ENCODE measurements at regions of chr17 and their contacts with region 1.

Region 1: DNA sequence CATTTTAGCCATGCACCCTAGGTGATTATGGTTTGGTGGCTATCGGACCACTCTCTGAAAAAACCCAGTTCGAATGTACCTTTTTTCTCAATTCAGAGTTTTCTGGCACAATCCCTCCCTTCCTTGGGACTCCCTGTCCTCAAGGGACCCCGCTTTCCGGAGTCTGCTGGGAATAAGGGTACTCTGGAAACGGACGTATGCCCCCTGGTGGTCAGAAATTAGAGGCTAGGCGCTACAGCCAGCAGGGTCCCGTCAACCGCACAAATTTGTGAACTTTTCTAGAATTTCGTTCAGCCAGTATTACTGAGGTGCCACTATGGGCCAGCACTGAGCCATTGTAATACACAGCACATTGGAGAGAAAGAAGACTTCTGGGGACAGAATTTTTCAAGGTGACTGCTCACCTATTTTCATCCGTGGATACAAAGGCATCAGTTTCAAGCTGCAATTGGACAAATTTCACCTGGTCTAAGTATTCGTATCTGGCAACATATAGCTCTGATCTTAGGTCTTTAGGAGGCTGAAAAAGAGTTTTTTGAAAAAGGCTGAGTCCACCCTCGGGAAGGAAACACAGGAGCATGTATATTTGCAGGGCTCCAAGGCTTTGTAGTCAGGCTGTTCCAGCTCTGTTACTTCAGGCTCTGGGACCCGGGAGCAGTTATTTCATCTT is 27.1 kb upstream of the CRYBA1 start:
- DNase-seq: peak; percentile 83
- H3K4me3 Mint-ChIP-seq: no peak overlapping the region
- H3K27ac Mint-ChIP-seq: no peak overlapping the region
- H3K4me1 Mint-ChIP-seq: peaks cover 7% of the 10 kb centered on the region
- H3K27me3 Mint-ChIP-seq: peaks cover 15% of the 10 kb centered on the region

Region 2: GRCh38 chr17:29102741-29103181 is 116.8 kb before region 1 on chr17:
- CTCF ChIA-PET with region 1: no interaction called
- DNase-seq: no peak
- H3K4me3 Mint-ChIP-seq: no peak overlapping the region
- H3K27ac Mint-ChIP-seq: no peak overlapping the region
- H3K4me1 Mint-ChIP-seq: peaks cover 7% of the 10 kb centered on the region
- H3K27me3 Mint-ChIP-seq: no peaks in the 10 kb centered on the region

Region 3: GRCh38 chr17:29124117-29124924 is 95.2 kb before region 1 on chr17:
- CTCF ChIA-PET with region 1: interaction called, 59 read pairs
- DNase-seq: peak; percentile 66
- H3K4me3 Mint-ChIP-seq: no peak overlapping the region
- H3K27ac Mint-ChIP-seq: no peak overlapping the region
- H3K4me1 Mint-ChIP-seq: peaks cover 3% of the 10 kb centered on the region
- H3K27me3 Mint-ChIP-seq: no peaks in the 10 kb centered on the region

Region 4: DNA sequence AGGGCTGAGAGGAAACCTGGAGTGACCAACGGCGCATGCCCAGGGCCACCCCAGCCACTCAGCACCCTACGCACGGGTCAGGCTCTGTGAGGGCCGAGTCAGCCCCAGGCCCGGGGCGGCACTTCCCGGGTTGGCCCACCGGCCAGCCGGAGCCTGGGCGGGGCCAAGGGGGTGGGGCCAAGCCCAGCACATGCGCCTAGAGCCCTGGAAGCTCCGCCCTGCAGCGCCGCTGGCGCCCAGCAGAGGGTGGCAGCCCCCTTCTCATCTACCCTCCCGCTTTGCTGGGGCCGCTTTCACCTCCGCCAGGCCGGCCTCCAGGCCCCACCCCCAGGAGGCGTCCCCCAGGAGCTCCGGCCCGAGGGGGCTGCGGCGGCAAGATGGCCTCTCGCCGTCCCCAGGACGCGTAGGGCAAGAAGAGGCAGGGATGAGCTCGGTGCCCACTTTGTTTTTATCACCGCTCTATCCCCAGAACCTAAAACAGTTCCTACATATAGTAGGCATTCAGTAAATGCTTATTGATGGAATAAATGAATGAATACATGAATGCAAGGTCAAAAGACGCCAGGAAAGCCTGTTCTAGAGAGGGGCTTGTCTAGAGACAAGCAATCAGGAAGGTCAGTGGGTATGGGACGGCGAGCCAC is 70.6 kb before region 1 on chr17:
- CTCF ChIA-PET with region 1: interaction called, 130 read pairs
- DNase-seq: peak; percentile 95
- H3K4me3 Mint-ChIP-seq: peak overlapping the region; percentile 66
- H3K27ac Mint-ChIP-seq: peak overlapping the region; percentile 76
- H3K4me1 Mint-ChIP-seq: peaks cover 56% of the 10 kb centered on the region
- H3K27me3 Mint-ChIP-seq: no peaks in the 10 kb centered on the region

Region 5: DNA sequence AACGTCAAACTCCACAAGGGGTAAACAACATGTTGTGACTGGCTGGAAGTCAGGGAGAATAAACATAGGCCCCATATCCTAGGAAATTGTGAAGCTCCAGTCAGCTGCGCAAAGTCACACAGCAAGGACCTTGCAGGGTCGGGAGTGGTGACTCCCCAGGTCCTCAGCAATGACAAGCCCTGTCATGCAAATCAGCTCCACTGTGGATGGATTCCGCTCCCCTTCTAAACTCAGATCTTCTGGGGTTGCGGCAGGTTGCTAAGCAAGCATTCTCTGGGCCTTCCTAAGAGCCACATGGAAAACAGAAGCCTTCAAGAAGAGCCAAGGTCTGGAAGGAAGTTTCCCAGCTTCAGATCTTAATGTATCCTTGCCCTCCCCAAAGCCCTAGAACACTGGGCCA is 10.4 kb before region 1 on chr17:
- CTCF ChIA-PET with region 1: interaction called, 26 read pairs
- DNase-seq: no peak
- H3K4me3 Mint-ChIP-seq: no peak overlapping the region
- H3K27ac Mint-ChIP-seq: no peak overlapping the region
- H3K4me1 Mint-ChIP-seq: peaks cover 2% of the 10 kb centered on the region
- H3K27me3 Mint-ChIP-seq: peaks cover 18% of the 10 kb centered on the region

Region 6: GRCh38 chr17:29241015-29241963 is 21.8 kb after region 1 on chr17:
- CTCF ChIA-PET with region 1: interaction called, 13 read pairs
- DNase-seq: peak; percentile 23
- H3K4me3 Mint-ChIP-seq: no peak overlapping the region
- H3K27ac Mint-ChIP-seq: no peak overlapping the region
- H3K4me1 Mint-ChIP-seq: peaks cover 2% of the 10 kb centered on the region
- H3K27me3 Mint-ChIP-seq: no peaks in the 10 kb centered on the region

Measured in activated naive CD4-positive, alpha-beta T cell treated with anti-CD3 and anti-CD28 coated beads, Interleukin-2, amount 10 ng/mL, durations not matched to agents 7 days and 5 days (primary cell).